ENCODE measurements at regions of chr17 and their contacts with region 1.

Region 1: GRCh38 chr17:40531051-40531991 is 29.9 kb upstream of the TNS4 start:
- DNase-seq: peak in 13 of 14 experiments; percentile 51 to 84 (median 72)
- ATAC-seq: no peak
- H3K4me3 ChIP-seq: no peak overlapping the region
- H3K4me3 Mint-ChIP-seq: peak overlapping the region; percentile 8
- H3K27ac ChIP-seq: no peak overlapping the region
- H3K27ac Mint-ChIP-seq: peak overlapping the region; percentile 98
- H3K4me1 ChIP-seq: peaks cover 71% of the 10 kb centered on the region
- H3K4me1 Mint-ChIP-seq: peaks cover 72% of the 10 kb centered on the region
- H3K27me3 ChIP-seq: no peaks in the 10 kb centered on the region
- H3K27me3 Mint-ChIP-seq: peaks cover 5% of the 10 kb centered on the region
- CTCF ChIP-seq: no peak

Region 2: DNA sequence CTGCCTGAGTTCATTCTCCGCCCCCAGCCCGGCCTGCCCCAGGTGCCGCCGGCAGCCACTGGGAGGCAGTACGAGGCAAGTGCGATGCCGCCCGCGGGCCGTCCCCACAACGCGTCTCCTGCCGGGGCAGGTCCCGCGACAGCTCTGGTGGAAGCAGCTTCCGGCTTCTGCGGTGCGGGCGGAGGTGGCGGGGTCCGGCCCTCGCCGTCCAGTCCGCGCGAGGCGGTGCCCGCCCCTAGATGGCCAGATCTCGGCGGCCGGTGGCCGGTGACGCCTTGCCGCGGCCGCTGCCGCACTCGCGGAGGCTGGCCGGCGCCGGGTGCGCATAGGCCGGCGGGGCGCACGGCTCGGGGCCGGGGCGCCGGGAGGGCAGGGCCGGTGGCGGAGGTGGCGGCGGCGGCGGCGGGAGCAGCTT is 168.6 kb before region 1 on chr17:
- CTCF ChIA-PET with region 1: interaction called, 33 read pairs
- POLR2A ChIA-PET with region 1: interaction called, 8 read pairs
- intact Hi-C with region 1: loop called (anchors 1 kb)
- DNase-seq: peak; percentile 68 to 87 (median 74)
- ATAC-seq: peak; percentile 82
- H3K4me3 ChIP-seq: peak overlapping the region; percentile 36
- H3K4me3 Mint-ChIP-seq: peak overlapping the region; percentile 14
- H3K27ac ChIP-seq: no peak overlapping the region
- H3K27ac Mint-ChIP-seq: no peak overlapping the region
- H3K4me1 ChIP-seq: peaks cover 23% of the 10 kb centered on the region
- H3K4me1 Mint-ChIP-seq: peaks cover 16% of the 10 kb centered on the region
- H3K27me3 ChIP-seq: peaks cover 0 to 13% of the 10 kb centered on the region in 2 experiments
- H3K27me3 Mint-ChIP-seq: peaks cover 17% of the 10 kb centered on the region
- CTCF ChIP-seq: peak; percentile 56

Region 3: GRCh38 chr17:40433551-40434415 is 97.5 kb before region 1 on chr17:
- CTCF ChIA-PET with region 1: no interaction called
- POLR2A ChIA-PET with region 1: interaction called, 10 read pairs
- intact Hi-C with region 1: no loop called
- DNase-seq: peak in 3 of 14 experiments; percentile 33 to 41 (median 37)
- ATAC-seq: peak; percentile 74
- H3K4me3 ChIP-seq: no peak overlapping the region
- H3K4me3 Mint-ChIP-seq: no peak overlapping the region
- H3K27ac ChIP-seq: no peak overlapping the region
- H3K27ac Mint-ChIP-seq: no peak overlapping the region
- H3K4me1 ChIP-seq: peaks cover 3% of the 10 kb centered on the region
- H3K4me1 Mint-ChIP-seq: no peaks in the 10 kb centered on the region
- H3K27me3 ChIP-seq: no peaks in the 10 kb centered on the region
- H3K27me3 Mint-ChIP-seq: no peaks in the 10 kb centered on the region
- CTCF ChIP-seq: no peak

Region 4: GRCh38 chr17:40480501-40481003 is 50.8 kb before region 1 on chr17:
- CTCF ChIA-PET with region 1: interaction called, 33 read pairs
- POLR2A ChIA-PET with region 1: interaction called, 74 read pairs
- intact Hi-C with region 1: loop called (anchors 1 kb)
- DNase-seq: peak; percentile 71 to 96 (median 83)
- ATAC-seq: peak; percentile 87
- H3K4me3 ChIP-seq: no peak overlapping the region
- H3K4me3 Mint-ChIP-seq: peak overlapping the region; percentile 68
- H3K27ac ChIP-seq: peak overlapping the region; percentile 57 to 71
- H3K27ac Mint-ChIP-seq: peak overlapping the region; percentile 97
- H3K4me1 ChIP-seq: peaks cover 80% of the 10 kb centered on the region
- H3K4me1 Mint-ChIP-seq: peaks cover 67% of the 10 kb centered on the region
- H3K27me3 ChIP-seq: no peaks in the 10 kb centered on the region
- H3K27me3 Mint-ChIP-seq: no peaks in the 10 kb centered on the region
- CTCF ChIP-seq: no peak

Region 5: DNA sequence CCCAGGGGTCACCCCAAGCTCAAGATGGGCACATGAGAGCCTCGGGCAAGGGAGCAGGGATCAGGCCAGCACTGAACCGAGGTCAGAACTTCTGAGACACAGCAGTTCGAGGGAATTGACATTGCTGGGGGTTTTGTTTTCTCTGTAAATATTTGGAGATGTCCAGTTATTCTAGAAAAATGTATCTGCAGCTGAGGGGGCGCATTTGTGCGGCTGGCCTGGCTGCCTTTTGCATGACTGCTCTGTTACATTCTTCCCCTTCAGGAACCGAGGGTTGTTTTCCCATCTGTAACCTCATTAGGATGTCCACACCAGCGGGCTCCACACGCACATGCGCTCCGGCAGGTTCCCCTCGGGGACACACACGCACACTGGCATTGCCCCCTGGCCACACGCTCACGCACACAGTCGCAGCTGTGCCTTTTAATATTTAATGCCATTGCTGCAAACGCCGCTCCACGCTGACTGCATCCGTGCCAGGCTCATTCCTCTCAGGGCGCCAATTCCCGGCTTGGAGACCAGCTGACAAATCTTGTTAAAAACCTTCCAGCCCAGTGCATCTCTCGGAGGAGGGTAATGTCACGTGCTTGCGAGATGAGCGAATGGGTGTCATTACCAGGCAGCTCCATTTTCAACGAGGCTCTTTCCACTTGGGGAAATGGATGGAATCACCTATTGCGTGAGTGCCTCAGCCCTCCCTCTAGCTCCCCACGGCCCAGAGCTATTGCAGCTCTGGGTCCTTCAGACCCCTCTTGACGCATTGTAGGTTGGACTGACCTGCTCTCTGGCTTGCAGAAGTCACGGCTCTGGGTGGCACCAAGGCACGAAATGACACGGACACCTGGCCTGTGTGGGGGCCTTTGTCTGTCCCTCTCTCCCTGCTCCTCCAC is 20.8 kb after region 1 on chr17:
- CTCF ChIA-PET with region 1: interaction called, 22 read pairs
- POLR2A ChIA-PET with region 1: interaction called, 668 read pairs
- intact Hi-C with region 1: no loop called
- DNase-seq: peak in 6 of 14 experiments; percentile 39 to 76 (median 44)
- ATAC-seq: no peak
- H3K4me3 ChIP-seq: no peak overlapping the region
- H3K4me3 Mint-ChIP-seq: peak overlapping the region; percentile 55
- H3K27ac ChIP-seq: peak overlapping the region in 1 of 2 donors; percentile 100
- H3K27ac Mint-ChIP-seq: peak overlapping the region; percentile 92
- H3K4me1 ChIP-seq: peaks cover 99% of the 10 kb centered on the region
- H3K4me1 Mint-ChIP-seq: peaks cover 99% of the 10 kb centered on the region
- H3K27me3 ChIP-seq: no peaks in the 10 kb centered on the region
- H3K27me3 Mint-ChIP-seq: no peaks in the 10 kb centered on the region
- CTCF ChIP-seq: no peak

Region 6: DNA sequence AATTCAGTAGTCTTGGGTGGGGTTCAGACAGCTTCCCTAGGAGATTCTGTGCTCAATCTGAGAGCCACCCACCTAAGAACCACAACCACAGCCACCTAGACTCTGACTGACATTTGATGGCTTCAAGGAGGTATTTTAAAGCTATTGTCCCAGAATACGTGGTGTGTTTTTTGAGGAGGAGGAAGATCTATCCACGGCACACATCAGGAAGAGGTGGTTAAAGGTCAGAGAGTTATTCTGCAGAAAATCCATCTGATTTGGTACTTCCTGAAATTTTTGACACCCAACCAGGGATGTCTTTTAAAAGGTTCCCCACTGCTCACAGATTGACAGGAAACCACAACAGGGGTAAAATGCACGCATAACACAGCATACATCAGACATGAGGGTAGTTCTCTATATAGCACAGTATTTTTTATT is 91.2 kb after region 1 on chr17:
- CTCF ChIA-PET with region 1: interaction called, 10 read pairs
- POLR2A ChIA-PET with region 1: no interaction called
- intact Hi-C with region 1: no loop called
- DNase-seq: peak in 3 of 14 experiments; percentile 56 to 71 (median 69)
- ATAC-seq: peak; percentile 65
- H3K4me3 ChIP-seq: no peak overlapping the region
- H3K4me3 Mint-ChIP-seq: peak overlapping the region; percentile 71
- H3K27ac ChIP-seq: peak overlapping the region in 1 of 2 donors; percentile 31
- H3K27ac Mint-ChIP-seq: peak overlapping the region; percentile 70
- H3K4me1 ChIP-seq: peaks cover 29% of the 10 kb centered on the region
- H3K4me1 Mint-ChIP-seq: peaks cover 54% of the 10 kb centered on the region
- H3K27me3 ChIP-seq: no peaks in the 10 kb centered on the region
- H3K27me3 Mint-ChIP-seq: no peaks in the 10 kb centered on the region
- CTCF ChIP-seq: no peak

Region 7: GRCh38 chr17:40827746-40828453 is 296.6 kb after region 1 on chr17:
- CTCF ChIA-PET with region 1: no interaction called
- POLR2A ChIA-PET with region 1: no interaction called
- intact Hi-C with region 1: no loop called
- DNase-seq: no peak
- ATAC-seq: no peak
- H3K4me3 ChIP-seq: no peak overlapping the region
- H3K4me3 Mint-ChIP-seq: no peak overlapping the region
- H3K27ac ChIP-seq: no peak overlapping the region
- H3K27ac Mint-ChIP-seq: no peak overlapping the region
- H3K4me1 ChIP-seq: no peaks in the 10 kb centered on the region
- H3K4me1 Mint-ChIP-seq: peaks cover 5% of the 10 kb centered on the region
- H3K27me3 ChIP-seq: no peaks in the 10 kb centered on the region
- H3K27me3 Mint-ChIP-seq: peaks cover 12% of the 10 kb centered on the region
- CTCF ChIP-seq: no peak

Region 8: GRCh38 chr17:40850323-40850972 is 319.1 kb after region 1 on chr17:
- CTCF ChIA-PET with region 1: no interaction called
- POLR2A ChIA-PET with region 1: no interaction called
- intact Hi-C with region 1: no loop called
- DNase-seq: no peak
- ATAC-seq: no peak
- H3K4me3 ChIP-seq: no peak overlapping the region
- H3K4me3 Mint-ChIP-seq: no peak overlapping the region
- H3K27ac ChIP-seq: no peak overlapping the region
- H3K27ac Mint-ChIP-seq: no peak overlapping the region
- H3K4me1 ChIP-seq: no peaks in the 10 kb centered on the region
- H3K4me1 Mint-ChIP-seq: no peaks in the 10 kb centered on the region
- H3K27me3 ChIP-seq: peaks cover 0 to 33% of the 10 kb centered on the region in 2 experiments
- H3K27me3 Mint-ChIP-seq: peaks cover 52% of the 10 kb centered on the region
- CTCF ChIP-seq: no peak